ENCODE measurements at regions of chr9 and their contacts with region 1.

Region 1: DNA sequence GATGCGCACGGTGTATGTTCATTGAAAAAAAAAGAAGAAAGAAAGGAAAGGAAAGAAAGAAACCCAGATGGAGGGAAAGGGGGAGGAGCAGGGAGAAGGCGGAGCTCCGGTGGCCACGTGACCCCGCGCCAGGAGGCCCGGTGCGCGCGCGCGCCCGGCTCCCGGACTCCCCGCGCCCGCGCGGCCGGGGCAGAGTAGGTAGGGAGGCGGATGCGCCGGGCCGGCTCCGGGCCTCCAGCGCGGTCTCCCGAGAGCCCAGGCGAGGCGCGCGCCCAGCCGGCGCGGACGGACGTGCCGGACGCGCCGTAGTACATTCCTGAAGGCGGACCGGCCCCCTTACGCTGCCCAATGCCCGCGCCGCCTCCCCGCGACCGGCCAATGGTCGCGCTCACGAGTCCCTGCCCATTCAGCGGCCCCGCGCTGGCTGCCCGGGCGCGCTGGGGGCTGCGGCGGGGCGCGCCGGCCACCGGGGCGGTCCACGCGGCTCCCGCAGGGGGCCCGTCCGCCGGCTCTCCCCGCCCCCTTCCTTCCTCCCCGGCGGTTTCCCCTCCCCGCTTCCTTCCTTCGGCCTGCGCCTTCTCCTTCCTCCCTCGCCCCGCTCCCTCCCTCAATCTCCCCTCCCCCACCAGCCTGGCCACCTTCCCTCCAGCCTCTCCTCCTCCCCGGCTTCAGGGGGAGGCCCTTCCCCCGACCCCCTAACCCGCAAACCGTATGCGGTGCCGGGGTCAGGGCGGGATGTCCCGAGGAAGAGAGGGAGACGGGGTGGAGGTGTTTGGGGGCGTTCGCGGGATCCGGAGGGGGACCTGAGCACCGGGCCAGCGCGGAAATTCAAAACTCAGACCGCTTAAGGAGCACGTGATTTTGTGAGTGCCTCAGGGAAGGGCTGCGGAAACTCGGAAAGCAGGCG is 5.8 kb downstream of the PTCH1 start:
- DNase-seq: peak; percentile 88 to 90
- ATAC-seq: peak; percentile 73 to 90 (median 78)
- H3K4me3 ChIP-seq: peak overlapping the region; percentile 69 to 97 (median 82)
- H3K27ac ChIP-seq: peak overlapping the region; percentile 64 to 99 (median 92)
- H3K4me1 ChIP-seq: peaks cover 5 to 40% (median 24%) of the 10 kb centered on the region in 9 donors
- H3K27me3 ChIP-seq: peaks cover 0 to 89% (median 0%) of the 10 kb centered on the region in 7 donors
- CTCF ChIP-seq: no peak

Region 2: GRCh38 chr9:95317119-95317892 is 193.7 kb before region 1 on chr9 and contains the start of gene FANCC:
- intact Hi-C with region 1: loop called in 7 of 10 experiments (anchors 2 to 10 kb)
- DNase-seq: peak; percentile 93 to 95
- ATAC-seq: peak; percentile 97 to 99 (median 98)
- H3K4me3 ChIP-seq: peak within 1 kb of the TSS; percentile 58 to 100 (median 93)
- H3K27ac ChIP-seq: peak within 1 kb of the TSS; percentile 64 to 99 (median 96)
- H3K4me1 ChIP-seq: peaks cover 0 to 22% (median 7%) of the 10 kb centered on the region in 9 donors
- H3K27me3 ChIP-seq: no peaks in the 10 kb centered on the region
- CTCF ChIP-seq: peak in 1 of 9 donors; percentile 4
- total RNA-seq, gene FANCC: 3.1 to 6.8 (median 4.7) TPM

Region 3: GRCh38 chr9:95462249-95463147 is 48.5 kb before region 1 on chr9:
- intact Hi-C with region 1: loop called in 2 of 10 experiments (anchors 2 to 5 kb)
- DNase-seq: peak; percentile 54 to 79
- ATAC-seq: peak; percentile 86 to 96 (median 95)
- H3K4me3 ChIP-seq: peak overlapping the region in 9 of 10 donors; percentile 15 to 51 (median 43)
- H3K27ac ChIP-seq: peak overlapping the region in 9 of 10 donors; percentile 8 to 75 (median 62)
- H3K4me1 ChIP-seq: peaks cover 11 to 21% (median 19%) of the 10 kb centered on the region in 9 donors
- H3K27me3 ChIP-seq: peaks cover 0 to 5% (median 0%) of the 10 kb centered on the region in 7 donors
- CTCF ChIP-seq: no peak

Region 4: GRCh38 chr9:95626885-95627558 is 116.1 kb after region 1 on chr9:
- intact Hi-C with region 1: loop called in 3 of 10 experiments (anchors 5 to 10 kb)
- DNase-seq: peak; percentile 48 to 63
- ATAC-seq: peak; percentile 86 to 96 (median 92)
- H3K4me3 ChIP-seq: peak overlapping the region in 4 of 10 donors; percentile 3 to 29 (median 20)
- H3K27ac ChIP-seq: peak overlapping the region in 9 of 10 donors; percentile 47 to 91 (median 71)
- H3K4me1 ChIP-seq: peaks cover 0 to 22% (median 7%) of the 10 kb centered on the region in 9 donors
- H3K27me3 ChIP-seq: peaks cover 0 to 5% (median 0%) of the 10 kb centered on the region in 7 donors
- CTCF ChIP-seq: no peak

Region 5: DNA sequence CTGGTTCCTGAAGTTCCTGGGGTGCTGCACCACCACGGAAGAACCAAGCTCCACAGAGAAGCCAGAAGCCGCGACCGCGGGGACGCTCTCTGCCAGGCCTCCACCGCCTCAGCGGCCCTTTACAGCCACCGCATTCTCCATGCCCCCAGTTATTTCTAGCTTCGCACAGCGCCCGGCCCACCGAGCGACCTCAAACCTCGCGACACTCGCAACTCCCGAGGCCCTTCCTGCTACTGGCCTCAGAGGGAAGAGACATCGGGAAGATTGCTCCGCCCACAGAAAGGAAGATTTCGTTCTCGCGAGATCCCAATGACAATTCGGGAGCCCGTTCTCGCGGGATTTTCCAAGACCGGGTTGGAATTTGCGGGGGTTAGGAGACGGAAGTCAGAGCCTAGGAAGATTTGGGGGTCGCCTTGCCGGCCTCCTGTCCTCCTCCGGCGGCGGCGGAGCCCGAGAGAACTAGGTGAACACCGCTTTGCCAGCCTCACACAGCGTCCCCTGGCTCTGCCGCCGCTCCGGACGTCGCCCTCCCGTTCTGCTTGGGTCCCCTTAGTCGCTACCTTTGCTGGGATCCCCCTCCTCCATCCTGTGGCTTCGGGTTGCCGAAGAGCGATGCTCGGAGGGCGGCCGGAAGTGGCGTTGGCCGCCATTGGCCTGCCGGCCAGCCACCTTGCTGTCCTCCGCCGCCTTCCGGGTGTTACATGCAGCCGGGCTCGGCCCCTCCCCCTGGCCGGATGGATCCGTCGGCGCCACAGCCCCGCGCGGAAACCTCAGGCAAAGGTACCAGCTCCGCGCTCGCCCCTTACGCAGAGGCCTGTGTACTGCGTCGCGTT is 364.6 kb after region 1 on chr9 and contains the start of gene ERCC6L2:
- intact Hi-C with region 1: loop called in 6 of 10 experiments (anchors 5 to 10 kb)
- DNase-seq: peak; percentile 92 to 98
- ATAC-seq: peak; percentile 96 to 98 (median 98)
- H3K4me3 ChIP-seq: peak within 1 kb of the TSS in 1 of 10 donors; percentile 93
- H3K27ac ChIP-seq: peak within 1 kb of the TSS in 5 of 10 donors; percentile 99 to 100 (median 100)
- H3K4me1 ChIP-seq: peaks cover 0 to 27% (median 20%) of the 10 kb centered on the region in 9 donors
- H3K27me3 ChIP-seq: no peaks in the 10 kb centered on the region
- CTCF ChIP-seq: peak in 3 of 9 donors; percentile 9 to 30 (median 27)
- total RNA-seq, gene ERCC6L2: 21.6 to 37.5 (median 28.4) TPM

Measured in heart right ventricle (tissue), 16 donors.